ENCODE measurements at regions of chr3 and their contacts with region 1.

Region 1: DNA sequence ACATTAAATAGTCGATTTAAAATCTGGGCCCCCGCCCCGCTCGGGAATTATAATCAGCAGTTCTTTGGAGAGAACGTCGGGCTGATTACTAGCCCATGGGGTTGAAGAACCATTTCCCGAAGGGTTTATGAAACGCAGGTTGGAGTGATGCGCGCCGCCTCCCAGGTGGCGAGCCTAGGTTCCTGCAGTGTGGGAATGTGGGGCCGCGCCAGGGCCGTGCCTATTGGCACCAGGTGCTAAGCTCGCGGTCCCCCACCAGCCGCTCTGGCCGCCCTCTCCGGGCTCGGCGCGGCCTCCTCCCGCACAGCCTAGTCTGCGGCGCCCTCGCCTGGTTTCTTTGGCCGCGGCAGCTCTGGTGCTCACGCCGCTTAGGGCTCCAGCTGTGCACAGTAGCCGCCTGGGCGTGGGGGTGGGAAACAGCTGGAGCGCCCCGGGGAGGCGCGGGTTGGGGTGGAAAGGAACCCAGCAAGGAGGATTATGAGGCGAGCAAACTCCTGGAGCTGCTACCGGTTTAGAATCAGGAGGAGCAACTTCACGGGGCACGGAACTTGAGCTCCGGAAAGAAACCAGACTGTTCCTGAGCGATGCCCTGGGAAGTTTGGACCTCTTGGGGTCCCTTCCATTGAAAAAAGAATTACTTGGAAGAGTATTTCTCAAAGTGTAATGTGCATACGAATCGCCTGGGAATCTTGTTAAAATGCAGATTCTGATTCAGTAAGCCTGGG is 5.6 kb upstream of the MECOM start:
- DNase-seq: peak in 2 of 5 donors; percentile 15 to 28
- H3K4me3 ChIP-seq: no peak overlapping the region
- H3K4me3 Mint-ChIP-seq: peak overlapping the region; percentile 47 to 82 (median 68)
- H3K27ac ChIP-seq: no peak overlapping the region
- H3K27ac Mint-ChIP-seq: no peak overlapping the region
- H3K4me1 ChIP-seq: peaks cover 21% of the 10 kb centered on the region
- H3K4me1 Mint-ChIP-seq: peaks cover 9 to 37% (median 17%) of the 10 kb centered on the region in 4 donors
- H3K27me3 ChIP-seq: peaks cover 46% of the 10 kb centered on the region
- H3K27me3 Mint-ChIP-seq: peaks cover 49 to 58% of the 10 kb centered on the region in 2 donors

Region 2: GRCh38 chr3:169149349-169149890 is 519.7 kb before region 1 on chr3:
- CTCF ChIA-PET with region 1: interaction called, 5 read pairs
- POLR2A ChIA-PET with region 1: no interaction called
- intact Hi-C with region 1: loop called (anchors 1 kb)
- DNase-seq: peak; percentile 41 to 59 (median 52)
- H3K4me3 ChIP-seq: no peak overlapping the region
- H3K4me3 Mint-ChIP-seq: peak overlapping the region in 6 of 8 donors; percentile 39 to 62 (median 55)
- H3K27ac ChIP-seq: no peak overlapping the region
- H3K27ac Mint-ChIP-seq: no peak overlapping the region
- H3K4me1 ChIP-seq: peaks cover 17% of the 10 kb centered on the region
- H3K4me1 Mint-ChIP-seq: peaks cover 13 to 25% (median 20%) of the 10 kb centered on the region in 4 donors
- H3K27me3 ChIP-seq: peaks cover 34% of the 10 kb centered on the region
- H3K27me3 Mint-ChIP-seq: peaks cover 44 to 45% of the 10 kb centered on the region in 2 donors

Region 3: DNA sequence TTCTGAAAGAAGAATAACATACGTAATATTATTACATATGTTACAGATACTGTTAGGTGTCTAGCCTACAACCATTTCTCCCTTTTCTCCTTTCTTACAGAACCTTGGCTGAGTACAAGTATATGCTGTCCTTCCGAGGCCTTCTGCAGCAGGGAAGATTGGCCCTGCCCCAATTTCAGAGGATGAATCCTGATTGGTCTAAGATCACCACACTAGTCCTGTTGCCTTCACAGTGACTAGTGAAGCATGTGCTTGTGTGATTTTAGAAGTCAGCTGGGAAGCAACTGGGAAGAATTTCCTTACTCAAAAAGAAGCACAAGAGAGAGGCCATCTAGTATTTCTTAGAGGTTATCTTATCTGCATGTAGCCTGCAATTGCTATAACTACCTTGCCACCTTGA is 25.0 kb after region 1 on chr3:
- CTCF ChIA-PET with region 1: interaction called, 3 read pairs
- POLR2A ChIA-PET with region 1: no interaction called
- intact Hi-C with region 1: loop called (anchors 2 kb)
- DNase-seq: no peak
- H3K4me3 ChIP-seq: no peak overlapping the region
- H3K4me3 Mint-ChIP-seq: no peak overlapping the region
- H3K27ac ChIP-seq: no peak overlapping the region
- H3K27ac Mint-ChIP-seq: no peak overlapping the region
- H3K4me1 ChIP-seq: no peaks in the 10 kb centered on the region
- H3K4me1 Mint-ChIP-seq: peaks cover 0 to 3% (median 0%) of the 10 kb centered on the region in 4 donors
- H3K27me3 ChIP-seq: no peaks in the 10 kb centered on the region
- H3K27me3 Mint-ChIP-seq: peaks cover 12 to 17% of the 10 kb centered on the region in 2 donors

Region 4: GRCh38 chr3:170469151-170470062 is 800.3 kb after region 1 on chr3:
- CTCF ChIA-PET with region 1: no interaction called
- POLR2A ChIA-PET with region 1: no interaction called
- intact Hi-C with region 1: no loop called
- DNase-seq: no peak
- H3K4me3 ChIP-seq: no peak overlapping the region
- H3K4me3 Mint-ChIP-seq: no peak overlapping the region
- H3K27ac ChIP-seq: no peak overlapping the region
- H3K27ac Mint-ChIP-seq: no peak overlapping the region
- H3K4me1 ChIP-seq: no peaks in the 10 kb centered on the region
- H3K4me1 Mint-ChIP-seq: no peaks in the 10 kb centered on the region
- H3K27me3 ChIP-seq: no peaks in the 10 kb centered on the region
- H3K27me3 Mint-ChIP-seq: peaks cover 11 to 17% of the 10 kb centered on the region in 2 donors